IMR-90 (cell line): ENCODE measurements at regions of chr6 and their contacts with region 1.

Region 1: DNA sequence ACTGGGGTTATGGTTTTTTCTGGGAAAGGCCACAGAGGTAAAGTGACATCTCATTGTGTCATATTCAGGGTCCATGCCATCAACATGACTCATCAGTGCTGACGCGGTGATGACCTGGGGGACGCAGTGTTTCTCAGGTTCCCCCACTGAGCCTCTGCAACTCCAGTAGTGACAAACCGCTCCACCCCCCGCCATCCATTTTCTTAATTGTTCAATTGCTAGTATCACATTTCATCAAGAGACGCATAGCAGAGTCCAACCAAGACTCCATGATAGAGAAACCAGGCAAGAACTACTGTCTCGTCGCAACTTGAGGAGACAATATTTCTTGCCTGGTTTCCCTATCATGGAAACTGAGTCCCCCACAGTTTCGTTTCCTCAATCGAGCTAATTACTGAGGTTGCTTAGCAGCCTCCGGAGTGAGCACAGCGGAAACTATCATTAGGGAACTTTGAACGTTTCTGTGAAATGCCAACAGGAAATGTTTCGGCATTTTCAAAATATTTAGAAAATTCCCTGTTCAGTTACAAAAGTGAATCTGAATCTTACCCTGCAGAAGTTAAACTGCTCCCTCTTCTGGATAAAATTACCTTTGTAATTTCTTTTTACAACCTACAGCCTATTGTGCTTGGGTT is 12.2 kb upstream of the SERPINB1 start:
- DNase-seq: peak; percentile 89
- ATAC-seq: peak; percentile 58
- H3K4me3 ChIP-seq: peak overlapping the region; percentile 58
- H3K27ac ChIP-seq: peak overlapping the region; percentile 97
- H3K4me1 ChIP-seq: peaks cover 35% of the 10 kb centered on the region
- H3K27me3 ChIP-seq: no peaks in the 10 kb centered on the region
- CTCF ChIP-seq: peak; percentile 60
- POLR2A ChIP-seq: peak; percentile 55; the same call in 1 of the 2 replicates
- RAD21 ChIP-seq: peak; percentile 58

Region 2: GRCh38 chr6:2810092-2810671 is 43.7 kb before region 1 on chr6:
- CTCF ChIA-PET with region 1: no interaction called
- POLR2A ChIA-PET with region 1: no interaction called
- dilution Hi-C with region 1: no loop called
- in situ Hi-C with region 1: no loop called
- intact Hi-C with region 1: no loop called
- DNase-seq: peak; percentile 17
- ATAC-seq: no peak
- H3K4me3 ChIP-seq: no peak overlapping the region
- H3K27ac ChIP-seq: no peak overlapping the region
- H3K4me1 ChIP-seq: peaks cover 2% of the 10 kb centered on the region; the same call in 1 of the 2 replicates
- H3K27me3 ChIP-seq: no peaks in the 10 kb centered on the region
- CTCF ChIP-seq: no peak
- POLR2A ChIP-seq: no peak
- RAD21 ChIP-seq: no peak

Region 3: GRCh38 chr6:2900821-2901644 is 47.2 kb after region 1 on chr6:
- CTCF ChIA-PET with region 1: no interaction called
- POLR2A ChIA-PET with region 1: no interaction called
- dilution Hi-C with region 1: no loop called
- in situ Hi-C with region 1: no loop called
- intact Hi-C with region 1: loop called (anchors 2 kb)
- DNase-seq: no peak
- ATAC-seq: no peak
- H3K4me3 ChIP-seq: no peak overlapping the region
- H3K27ac ChIP-seq: no peak overlapping the region
- H3K4me1 ChIP-seq: peaks cover 2% of the 10 kb centered on the region; the same call in 1 of the 2 replicates
- H3K27me3 ChIP-seq: no peaks in the 10 kb centered on the region
- CTCF ChIP-seq: no peak
- POLR2A ChIP-seq: no peak
- RAD21 ChIP-seq: no peak

Region 4: DNA sequence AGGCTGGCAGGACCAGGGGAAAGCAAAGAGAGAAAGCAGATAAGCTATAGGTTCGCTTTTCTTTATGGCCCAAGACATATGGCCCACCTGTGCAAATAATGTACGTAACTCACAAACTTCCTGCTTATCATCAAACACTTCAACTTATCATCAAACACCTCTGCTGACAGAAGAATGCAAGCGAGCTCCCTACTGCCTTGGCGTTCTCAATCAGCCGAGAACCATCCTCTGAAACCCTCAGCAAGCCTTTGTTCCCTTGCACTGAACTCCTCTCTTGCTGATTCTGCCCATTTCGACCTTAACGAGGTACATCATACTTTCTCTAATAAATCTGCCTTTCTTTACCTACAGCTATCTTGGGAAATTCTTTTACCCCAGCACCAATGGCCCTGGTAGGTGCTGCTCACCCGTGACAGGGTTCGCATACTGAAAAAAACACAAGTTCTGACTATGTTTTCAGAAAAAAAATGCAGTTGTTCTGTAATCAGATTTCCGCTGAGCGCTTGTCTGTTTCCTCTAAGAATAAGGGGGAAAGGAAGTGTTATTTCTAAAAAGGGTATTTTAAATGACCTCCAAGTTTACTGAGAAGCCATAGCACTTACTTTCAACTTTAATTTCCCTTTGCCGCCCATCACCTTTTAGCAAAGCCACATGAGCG is 89.2 kb after region 1 on chr6:
- CTCF ChIA-PET with region 1: no interaction called
- POLR2A ChIA-PET with region 1: no interaction called
- dilution Hi-C with region 1: no loop called
- in situ Hi-C with region 1: no loop called
- intact Hi-C with region 1: no loop called
- DNase-seq: no peak
- ATAC-seq: no peak
- H3K4me3 ChIP-seq: no peak overlapping the region
- H3K27ac ChIP-seq: no peak overlapping the region
- H3K4me1 ChIP-seq: no peaks in the 10 kb centered on the region
- H3K27me3 ChIP-seq: no peaks in the 10 kb centered on the region
- CTCF ChIP-seq: no peak
- POLR2A ChIP-seq: no peak
- RAD21 ChIP-seq: no peak